ENCODE measurements at regions of chr3 and their contacts with region 1.

Region 1: GRCh38 chr3:107271787-107272387 is 105.4 kb upstream of the CCDC54 start:
- DNase-seq: peak; percentile 66
- H3K4me3 ChIP-seq: no peak overlapping the region
- H3K27ac ChIP-seq: no peak overlapping the region
- H3K4me1 ChIP-seq: no peaks in the 10 kb centered on the region
- CTCF ChIP-seq: peak; percentile 92

Region 2: DNA sequence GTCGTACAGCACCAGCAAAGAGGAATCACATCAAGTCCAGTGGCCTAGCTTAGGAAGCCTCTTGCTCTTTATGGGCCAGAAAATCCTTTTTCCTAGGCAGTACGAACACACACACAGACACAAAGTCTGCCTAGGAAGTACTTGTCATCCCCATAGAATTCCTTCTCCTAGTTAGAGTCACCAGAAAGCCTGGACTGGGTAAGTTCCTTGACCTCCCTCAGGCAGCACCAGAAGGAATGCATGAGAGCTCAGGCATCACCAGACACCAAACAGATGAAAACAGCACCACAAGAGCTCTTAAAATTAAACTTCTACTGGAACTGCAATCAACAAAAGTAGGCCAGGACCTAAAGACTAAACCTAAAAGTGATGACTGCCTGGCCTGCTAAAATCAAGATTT is 87.5 kb before region 1 on chr3:
- CTCF ChIA-PET with region 1: no interaction called
- POLR2A ChIA-PET with region 1: no interaction called
- intact Hi-C with region 1: no loop called
- DNase-seq: no peak
- H3K4me3 ChIP-seq: no peak overlapping the region
- H3K27ac ChIP-seq: no peak overlapping the region
- H3K4me1 ChIP-seq: no peaks in the 10 kb centered on the region
- CTCF ChIP-seq: no peak

Region 3: GRCh38 chr3:107421170-107421792 is 149.4 kb after region 1 on chr3:
- CTCF ChIA-PET with region 1: interaction called, 14 read pairs
- POLR2A ChIA-PET with region 1: interaction called, 3 read pairs
- intact Hi-C with region 1: loop called (anchors 1 kb)
- DNase-seq: peak; percentile 75
- H3K4me3 ChIP-seq: no peak overlapping the region
- H3K27ac ChIP-seq: no peak overlapping the region
- H3K4me1 ChIP-seq: peaks cover 18% of the 10 kb centered on the region
- CTCF ChIP-seq: peak; percentile 85

Region 4: GRCh38 chr3:107543666-107544065 is 271.8 kb after region 1 on chr3:
- CTCF ChIA-PET with region 1: interaction called, 3 read pairs
- POLR2A ChIA-PET with region 1: interaction called, 4 read pairs
- intact Hi-C with region 1: loop called (anchors 2 kb)
- DNase-seq: peak; percentile 28
- H3K4me3 ChIP-seq: no peak overlapping the region
- H3K27ac ChIP-seq: no peak overlapping the region
- H3K4me1 ChIP-seq: no peaks in the 10 kb centered on the region
- CTCF ChIP-seq: peak; percentile 76

Measured in OCI-LY7 (cell line).